ENCODE measurements at regions of chr6 and their contacts with region 1.

Region 1: DNA sequence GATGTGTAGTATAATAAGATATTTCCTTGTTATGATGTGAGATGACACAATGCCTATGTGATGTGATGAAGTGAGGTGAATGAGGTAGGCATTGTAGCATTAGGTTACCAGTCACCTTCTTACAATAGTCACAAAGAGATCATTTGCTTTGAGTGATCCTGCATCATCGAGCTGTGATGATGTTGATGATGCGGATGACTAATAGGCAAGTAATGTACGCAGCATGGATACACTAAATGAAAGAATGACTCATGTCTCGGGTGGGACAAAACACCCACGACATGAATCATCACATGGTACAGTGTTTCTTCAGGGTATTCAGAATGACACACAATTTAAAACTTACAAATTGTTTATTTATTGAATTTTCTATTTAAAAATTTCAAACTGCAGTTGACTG is 806.3 kb upstream of the GJE1 start:
- DNase-seq: no peak
- H3K4me3 Mint-ChIP-seq: no peak overlapping the region
- H3K27ac Mint-ChIP-seq: no peak overlapping the region
- H3K4me1 Mint-ChIP-seq: peaks cover 13% of the 10 kb centered on the region
- H3K27me3 Mint-ChIP-seq: peaks cover 2% of the 10 kb centered on the region

Region 2: DNA sequence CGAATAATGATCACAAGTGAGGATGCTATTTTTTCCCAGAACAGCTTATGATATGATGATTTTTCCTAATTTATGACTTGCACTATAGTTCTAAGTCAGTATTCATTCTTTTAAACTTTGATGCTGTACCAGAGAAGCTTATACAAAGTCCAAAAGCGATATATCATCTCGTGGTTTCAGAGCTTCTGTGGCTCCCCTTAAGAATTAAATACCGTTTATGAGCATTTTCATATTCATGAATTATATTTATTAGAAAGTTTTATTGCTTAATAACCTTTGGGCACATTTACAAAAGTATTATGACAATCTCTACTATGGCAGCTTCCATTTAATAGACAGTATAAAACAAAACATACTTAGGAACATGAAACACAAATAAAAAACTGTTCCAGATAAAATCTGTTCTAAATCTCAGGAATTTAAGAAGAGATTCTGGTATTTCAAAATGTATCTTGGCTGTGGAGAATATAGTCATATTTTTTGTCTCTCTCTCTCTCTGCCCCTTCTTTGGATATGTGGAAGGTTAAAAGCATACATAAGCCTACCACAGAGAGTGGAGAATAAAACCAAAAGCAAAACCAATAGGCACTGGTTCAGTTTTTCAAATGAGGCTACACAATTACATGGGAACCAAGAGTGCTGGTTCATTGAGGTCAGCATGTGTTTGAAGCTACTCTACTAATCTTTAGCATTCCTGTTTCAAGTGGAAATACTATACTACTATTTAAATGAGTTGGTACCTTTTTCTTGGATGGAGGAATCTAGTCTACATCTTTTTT is 78.2 kb before region 1 on chr6:
- intact Hi-C with region 1: no loop called
- DNase-seq: no peak
- H3K4me3 Mint-ChIP-seq: no peak overlapping the region
- H3K27ac Mint-ChIP-seq: no peak overlapping the region
- H3K4me1 Mint-ChIP-seq: peaks cover 1% of the 10 kb centered on the region
- H3K27me3 Mint-ChIP-seq: no peaks in the 10 kb centered on the region

Region 3: GRCh38 chr6:141562851-141563763 is 236.7 kb after region 1 on chr6:
- intact Hi-C with region 1: loop called (anchors 1 kb)
- DNase-seq: peak; percentile 32
- H3K4me3 Mint-ChIP-seq: peak overlapping the region; percentile 59
- H3K27ac Mint-ChIP-seq: peak overlapping the region; percentile 48
- H3K4me1 Mint-ChIP-seq: peaks cover 18% of the 10 kb centered on the region
- H3K27me3 Mint-ChIP-seq: peaks cover 10% of the 10 kb centered on the region

Measured in activated T-helper 2 cell treated with anti-CD3 and anti-CD28 coated beads, Interferon-gamma antibody, Interleukin-2, Interleukin-4, amounts not matched to agents 10 μg/mL and 5 μg/mL and 100 μg/mL, durations not matched to agents 14 hours and 24 hours and 36 hours (primary cell).